ENCODE measurements at regions of chr20 and their contacts with region 1.

Region 1: DNA sequence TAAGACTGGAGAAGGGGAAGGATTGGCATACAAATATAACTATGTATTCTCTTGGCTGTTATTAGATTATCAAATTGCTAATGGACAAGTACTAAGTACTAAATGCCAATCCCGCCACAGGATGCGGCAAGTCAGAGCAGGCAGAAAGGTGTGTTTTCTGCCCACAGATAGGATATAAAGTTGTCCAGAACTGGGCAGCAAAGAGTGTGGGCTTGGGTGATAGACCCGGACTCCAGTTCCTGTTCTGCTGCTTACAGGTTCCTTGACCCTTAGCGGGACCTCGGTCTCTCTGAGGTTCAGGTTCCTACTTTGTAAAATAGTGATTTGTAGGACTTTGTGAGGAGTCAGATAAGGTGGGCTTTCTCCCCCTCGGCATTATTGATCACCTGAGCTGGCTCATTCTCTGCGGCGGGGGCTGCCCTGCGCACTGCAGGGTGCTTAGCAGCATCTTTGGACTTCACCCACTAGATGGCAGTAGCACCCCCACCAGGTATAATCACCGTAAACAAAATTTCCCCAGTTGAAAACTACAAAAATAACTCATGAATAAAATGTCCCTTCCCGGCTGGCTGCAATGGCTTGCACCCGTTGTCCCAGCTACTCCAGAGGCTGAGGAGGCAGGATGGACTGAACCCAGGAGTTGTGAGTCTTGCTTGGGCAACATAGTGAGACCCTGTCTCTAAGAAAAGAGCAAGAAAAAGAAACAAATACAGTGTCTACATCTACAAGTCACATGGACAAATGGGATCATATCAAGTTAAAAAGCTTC is 193.1 kb downstream of the DOK5 start:
- ATAC-seq: peak in 2 of 8 experiments; percentile 43 to 86
- H3K4me3 ChIP-seq: no peak overlapping the region
- H3K27ac ChIP-seq: no peak overlapping the region
- H3K4me1 ChIP-seq: no peaks in the 10 kb centered on the region

Region 2: GRCh38 chr20:52972190-52972937 is 1696.1 kb before region 1 on chr20 and contains the start of gene TSHZ2:
- in situ Hi-C with region 1: no loop called
- ATAC-seq: peak; percentile 76 to 87 (median 82)
- H3K4me3 ChIP-seq: peak within 1 kb of the TSS; percentile 40 to 81 (median 49)
- H3K27ac ChIP-seq: peak within 1 kb of the TSS; percentile 34 to 84
- H3K4me1 ChIP-seq: peaks cover 7 to 11% of the 10 kb centered on the region in 2 donors
- total RNA-seq, gene TSHZ2: 11.4 to 125 (median 47.7) TPM

Region 3: DNA sequence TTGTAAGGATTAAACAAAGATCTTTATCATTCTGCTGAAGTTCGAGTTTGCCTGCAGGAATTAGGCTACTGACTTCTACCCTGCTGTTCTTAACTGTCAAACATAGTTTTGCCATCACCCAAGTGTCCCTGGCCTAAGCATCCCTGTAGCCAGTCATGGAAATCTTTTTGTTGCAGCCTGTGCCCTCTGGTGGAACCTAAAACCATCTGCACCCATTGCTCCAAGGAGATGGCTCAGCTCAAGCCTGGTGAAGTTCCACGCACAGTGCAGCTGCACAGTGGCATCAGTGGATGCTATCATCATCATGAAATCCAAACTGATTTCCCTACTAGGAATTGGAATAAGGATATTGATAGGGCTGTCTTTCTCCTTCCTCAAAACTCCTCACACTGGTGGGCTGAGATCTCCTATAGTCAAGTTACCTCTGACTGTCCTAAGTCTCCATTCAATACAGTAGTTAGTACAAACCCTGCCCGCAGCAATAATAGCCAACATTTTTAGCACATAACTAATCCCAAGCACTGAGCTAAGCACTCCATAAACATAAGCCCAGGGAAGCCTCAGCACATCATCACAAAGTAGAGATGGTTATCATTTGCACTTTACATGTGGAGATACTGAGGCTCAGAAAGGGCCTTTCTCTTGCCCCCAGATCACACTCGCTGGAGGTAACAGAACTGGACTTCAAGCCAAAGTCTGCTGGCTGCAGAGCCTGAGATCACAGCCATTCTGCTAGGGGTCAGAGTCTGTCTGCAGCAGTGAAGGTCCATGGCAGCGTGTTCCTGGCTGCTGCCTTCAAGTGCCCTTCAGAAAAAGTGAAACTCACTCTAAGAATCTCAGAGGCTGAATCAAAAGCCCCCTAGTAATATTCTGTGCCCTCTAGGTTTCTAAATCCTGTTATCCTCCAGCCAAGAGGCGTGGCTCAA is 1502.9 kb after region 1 on chr20:
- in situ Hi-C with region 1: loop called in 3 of 9 experiments (anchors 25 kb)
- ATAC-seq: peak in 5 of 8 experiments; percentile 48 to 76 (median 70)
- H3K4me3 ChIP-seq: no peak overlapping the region
- H3K27ac ChIP-seq: no peak overlapping the region
- H3K4me1 ChIP-seq: no peaks in the 10 kb centered on the region

Region 4: DNA sequence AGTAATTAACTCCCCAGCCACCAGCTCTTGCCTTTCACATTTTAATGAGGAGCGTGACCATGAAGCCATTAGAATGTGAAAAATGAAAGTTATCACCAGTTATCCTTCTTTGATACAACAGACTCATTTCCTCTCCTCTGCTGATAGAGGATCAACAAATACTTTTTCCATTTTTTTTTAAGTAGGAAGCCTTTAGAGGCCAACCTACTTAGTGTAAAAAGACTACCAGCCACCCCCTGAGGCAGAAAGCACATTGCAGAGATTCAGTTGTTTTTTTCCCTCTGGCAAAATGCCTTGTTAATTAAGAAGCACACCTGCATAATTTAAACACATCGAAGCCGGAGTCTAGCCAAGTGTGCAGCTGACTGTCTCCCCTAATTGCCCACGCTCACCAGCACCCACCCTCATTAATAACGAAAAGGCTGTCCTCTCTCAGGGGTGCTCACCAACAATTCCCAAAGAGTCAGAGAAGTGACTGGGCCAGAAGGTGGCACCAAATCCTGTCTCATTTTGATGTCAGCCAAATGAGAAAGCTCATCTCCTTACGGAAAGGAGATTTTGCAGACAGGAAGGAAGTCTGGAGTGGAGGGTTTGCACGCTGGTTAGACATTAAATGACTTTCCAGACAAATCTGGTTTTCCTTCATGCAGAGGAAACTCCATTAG is 1519.2 kb after region 1 on chr20:
- in situ Hi-C with region 1: loop called in 2 of 9 experiments (anchors 25 kb)
- ATAC-seq: peak in 5 of 8 experiments; percentile 56 to 78 (median 76)
- H3K4me3 ChIP-seq: no peak overlapping the region
- H3K27ac ChIP-seq: no peak overlapping the region
- H3K4me1 ChIP-seq: peaks cover 2 to 6% of the 10 kb centered on the region in 2 donors

Region 5: DNA sequence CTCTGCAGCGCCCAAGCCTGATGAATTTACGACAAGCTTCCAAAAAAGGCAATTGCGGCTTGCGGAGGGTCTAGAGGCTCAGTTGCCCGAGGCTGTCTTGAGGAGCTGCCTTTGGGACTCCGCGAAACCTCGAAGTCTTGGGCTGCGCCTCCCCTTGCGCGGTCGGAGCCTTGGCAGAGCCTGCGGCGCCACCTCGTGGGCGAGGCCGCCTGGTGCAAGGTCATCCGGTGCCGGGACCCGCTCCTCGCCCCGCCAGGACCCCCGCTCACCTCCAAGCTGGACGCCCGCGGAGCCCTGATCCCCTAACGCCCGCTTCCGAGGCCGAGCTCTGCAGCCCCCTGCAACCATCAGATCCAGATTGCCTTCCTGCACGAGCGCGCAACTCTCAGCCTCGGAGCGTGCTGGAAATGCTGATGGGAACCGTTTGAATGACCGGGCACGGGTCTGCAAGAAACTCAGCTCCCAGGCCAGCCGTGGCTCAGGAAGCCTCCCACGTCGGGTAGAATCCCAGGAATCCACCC is 1675.5 kb after region 1 on chr20:
- in situ Hi-C with region 1: loop called in 1 of 9 experiments (anchors 25 kb)
- ATAC-seq: peak; percentile 86 to 98 (median 91)
- H3K4me3 ChIP-seq: peak overlapping the region; percentile 21 to 34 (median 29)
- H3K27ac ChIP-seq: no peak overlapping the region
- H3K4me1 ChIP-seq: peaks cover 12 to 15% of the 10 kb centered on the region in 2 donors

Measured in motor neuron (in vitro differentiated cells).